T-cell (primary cell): ENCODE measurements at regions of chr15 and their contacts with region 1.

Region 1: GRCh38 chr15:42734076-42734672 is 2.8 kb downstream of the CDAN1 start:
- DNase-seq: no peak
- ATAC-seq: no peak
- H3K4me3 ChIP-seq: no peak overlapping the region
- H3K4me3 Mint-ChIP-seq: peak overlapping the region; percentile 50 to 58 (median 51)
- H3K27ac ChIP-seq: no peak overlapping the region
- H3K27ac Mint-ChIP-seq: peak overlapping the region; percentile 40 to 66
- H3K4me1 ChIP-seq: peaks cover 4 to 20% of the 10 kb centered on the region in 2 experiments
- H3K4me1 Mint-ChIP-seq: peaks cover 10 to 25% (median 19%) of the 10 kb centered on the region in 3 donors
- H3K27me3 ChIP-seq: no peaks in the 10 kb centered on the region
- H3K27me3 Mint-ChIP-seq: no peaks in the 10 kb centered on the region

Region 2: GRCh38 chr15:42065033-42065432 is 669.1 kb before region 1 on chr15:
- CTCF ChIA-PET with region 1: no interaction called
- POLR2A ChIA-PET with region 1: interaction called in 1 of 2 experiments, 13 read pairs
- DNase-seq: no peak
- ATAC-seq: no peak
- H3K4me3 ChIP-seq: no peak overlapping the region
- H3K4me3 Mint-ChIP-seq: no peak overlapping the region
- H3K27ac ChIP-seq: no peak overlapping the region
- H3K27ac Mint-ChIP-seq: no peak overlapping the region
- H3K4me1 ChIP-seq: peaks cover 0 to 2% of the 10 kb centered on the region in 2 experiments
- H3K4me1 Mint-ChIP-seq: peaks cover 0 to 7% (median 3%) of the 10 kb centered on the region in 3 donors
- H3K27me3 ChIP-seq: peaks cover 0 to 46% of the 10 kb centered on the region in 2 experiments
- H3K27me3 Mint-ChIP-seq: peaks cover 24 to 32% of the 10 kb centered on the region in 2 donors

Region 3: GRCh38 chr15:42973114-42973513 is 238.9 kb after region 1 on chr15:
- CTCF ChIA-PET with region 1: no interaction called
- POLR2A ChIA-PET with region 1: no interaction called
- DNase-seq: no peak
- ATAC-seq: no peak
- H3K4me3 ChIP-seq: no peak overlapping the region
- H3K4me3 Mint-ChIP-seq: no peak overlapping the region
- H3K27ac ChIP-seq: no peak overlapping the region
- H3K27ac Mint-ChIP-seq: no peak overlapping the region
- H3K4me1 ChIP-seq: no peaks in the 10 kb centered on the region
- H3K4me1 Mint-ChIP-seq: no peaks in the 10 kb centered on the region
- H3K27me3 ChIP-seq: no peaks in the 10 kb centered on the region
- H3K27me3 Mint-ChIP-seq: no peaks in the 10 kb centered on the region